ENCODE measurements at regions of chr17 and their contacts with region 1.

Region 1: DNA sequence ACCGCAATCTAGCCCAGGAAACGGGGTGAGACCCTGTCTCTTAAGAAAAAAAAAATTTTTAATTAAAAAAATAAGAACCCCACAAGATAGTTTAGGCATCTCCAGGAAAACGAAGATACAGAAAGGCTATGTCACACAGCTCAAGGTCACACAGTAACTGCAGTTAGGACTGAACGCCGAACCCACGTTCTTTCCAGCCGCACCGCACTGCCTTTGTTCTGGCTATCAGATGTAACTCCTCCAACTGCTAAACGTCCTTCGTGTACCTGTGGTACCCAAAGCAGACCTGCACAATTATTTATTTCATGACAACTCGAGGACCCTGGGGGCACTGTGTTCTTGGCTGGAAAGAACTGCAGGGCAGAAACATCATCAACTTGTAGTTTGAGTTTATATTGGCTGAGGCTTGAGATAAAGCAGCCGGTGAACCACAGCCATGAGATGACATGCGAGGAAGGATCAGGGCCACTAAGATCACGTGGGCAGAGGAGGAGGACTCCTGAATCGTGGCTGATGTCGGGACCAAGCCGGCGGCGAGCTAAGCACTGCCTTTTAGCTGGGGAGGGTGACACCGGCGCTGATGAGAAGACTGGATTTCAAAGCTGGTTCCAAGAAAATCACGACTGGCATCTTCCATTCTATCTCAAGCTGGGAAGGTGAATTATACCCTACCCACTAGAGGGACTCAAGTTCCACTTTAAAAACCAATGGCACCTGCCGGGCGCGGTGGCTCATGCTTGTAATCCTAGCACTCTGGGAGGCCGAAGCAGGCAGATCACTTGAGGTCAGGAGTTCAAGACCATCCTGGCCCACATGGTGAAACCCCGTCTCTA is 20.7 kb upstream of the MNT start:
- DNase-seq: no peak
- ATAC-seq: no peak
- H3K4me3 ChIP-seq: no peak overlapping the region
- H3K4me3 Mint-ChIP-seq: no peak overlapping the region
- H3K27ac ChIP-seq: no peak overlapping the region
- H3K27ac Mint-ChIP-seq: peak overlapping the region in 1 of 2 donors; percentile 66
- H3K4me1 ChIP-seq: no peaks in the 10 kb centered on the region
- H3K4me1 Mint-ChIP-seq: no peaks in the 10 kb centered on the region
- H3K27me3 ChIP-seq: no peaks in the 10 kb centered on the region
- H3K27me3 Mint-ChIP-seq: no peaks in the 10 kb centered on the region

Region 2: DNA sequence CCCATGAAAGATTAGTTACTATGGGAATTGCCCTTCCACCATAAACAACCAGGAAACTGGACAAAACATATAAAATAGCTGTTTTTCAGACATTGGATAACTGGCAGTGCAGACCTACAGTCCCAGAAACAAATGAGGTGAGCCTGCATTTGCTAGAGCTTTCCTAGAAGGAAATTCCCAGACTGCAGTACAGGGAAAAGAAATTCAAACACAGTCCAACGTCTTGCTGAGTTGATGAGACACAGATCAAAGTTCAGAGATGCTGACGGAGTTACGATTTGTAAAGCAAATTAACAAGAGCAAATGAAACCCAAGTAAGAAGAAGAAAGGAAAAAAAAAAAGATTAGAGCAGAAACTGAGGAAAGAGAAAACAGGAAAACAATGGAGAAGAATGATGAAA is 20.6 kb after region 1 on chr17:
- CTCF ChIA-PET with region 1: no interaction called
- POLR2A ChIA-PET with region 1: no interaction called
- DNase-seq: no peak
- ATAC-seq: no peak
- H3K4me3 ChIP-seq: no peak overlapping the region
- H3K4me3 Mint-ChIP-seq: no peak overlapping the region
- H3K27ac ChIP-seq: no peak overlapping the region
- H3K27ac Mint-ChIP-seq: peak overlapping the region in 1 of 2 donors; percentile 21
- H3K4me1 ChIP-seq: no peaks in the 10 kb centered on the region
- H3K4me1 Mint-ChIP-seq: peaks cover 0 to 6% (median 2%) of the 10 kb centered on the region in 3 donors
- H3K27me3 ChIP-seq: no peaks in the 10 kb centered on the region
- H3K27me3 Mint-ChIP-seq: no peaks in the 10 kb centered on the region

Region 3: DNA sequence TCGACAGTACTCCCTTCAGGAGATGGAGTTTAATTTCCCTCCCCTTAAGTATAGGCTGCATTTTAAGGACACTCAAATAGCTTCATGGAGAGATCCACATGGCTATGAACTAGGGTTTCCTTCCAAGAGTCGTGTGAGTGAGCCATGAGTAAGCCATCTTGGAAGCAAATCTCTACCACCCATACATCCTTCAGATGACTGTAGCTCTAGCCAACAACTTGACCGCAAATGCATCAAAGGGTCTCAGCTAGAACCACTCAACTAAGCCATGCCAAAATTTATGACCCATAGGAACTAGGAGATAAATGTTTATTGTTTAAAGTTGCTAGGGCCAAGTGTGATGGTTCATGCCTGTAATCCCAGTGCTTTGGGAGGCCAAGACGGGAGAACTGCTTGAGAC is 46.7 kb after region 1 on chr17:
- CTCF ChIA-PET with region 1: no interaction called
- POLR2A ChIA-PET with region 1: interaction called in 1 of 2 experiments, 11 read pairs
- DNase-seq: no peak
- ATAC-seq: no peak
- H3K4me3 ChIP-seq: no peak overlapping the region
- H3K4me3 Mint-ChIP-seq: no peak overlapping the region
- H3K27ac ChIP-seq: no peak overlapping the region
- H3K27ac Mint-ChIP-seq: no peak overlapping the region
- H3K4me1 ChIP-seq: no peaks in the 10 kb centered on the region
- H3K4me1 Mint-ChIP-seq: no peaks in the 10 kb centered on the region
- H3K27me3 ChIP-seq: no peaks in the 10 kb centered on the region
- H3K27me3 Mint-ChIP-seq: no peaks in the 10 kb centered on the region